ENCODE measurements at regions of chr20 and their contacts with region 1.

Region 1: DNA sequence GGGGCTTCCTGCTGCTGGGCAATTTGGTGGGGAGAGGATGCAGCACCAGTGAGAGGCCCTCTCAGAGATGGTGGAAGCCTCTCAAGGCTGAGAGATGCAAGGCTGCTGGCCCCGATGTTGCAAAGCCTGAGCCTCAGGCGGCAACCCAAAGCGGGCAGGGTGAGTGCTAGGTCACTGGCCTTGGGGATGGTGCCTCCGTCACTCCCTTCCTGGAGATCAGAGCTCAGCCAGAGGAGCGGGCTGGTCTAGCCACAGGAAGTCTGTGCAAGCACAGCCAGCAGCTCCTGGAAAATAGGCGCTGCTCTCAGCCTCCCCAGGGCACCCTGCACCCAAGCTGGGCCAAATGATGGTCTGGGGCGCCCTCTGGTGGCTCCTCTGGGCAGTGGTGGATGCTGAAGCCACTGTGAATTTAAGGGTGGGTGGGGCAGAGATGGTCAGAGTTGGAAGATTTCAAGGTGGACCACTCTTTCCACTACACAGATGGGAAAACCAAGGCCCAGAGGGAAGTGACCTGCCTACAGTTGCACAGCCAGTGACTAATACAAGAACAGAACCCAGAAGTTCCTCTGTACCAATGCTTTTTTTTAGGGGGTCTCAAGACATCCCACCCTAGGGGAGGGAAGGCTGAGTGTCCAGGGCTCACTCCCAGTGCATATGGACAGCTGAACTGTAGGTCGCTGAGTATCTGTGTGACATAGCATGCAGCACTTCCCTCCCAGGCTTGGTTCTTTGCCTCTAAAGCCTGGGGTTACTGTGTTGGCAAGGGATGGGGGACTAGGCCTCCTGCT is 20.8 kb downstream of the C20orf203 start:
- DNase-seq: peak; percentile 77 to 97 (median 86)
- ATAC-seq: peak; percentile 97
- H3K4me3 ChIP-seq: no peak overlapping the region
- H3K4me3 Mint-ChIP-seq: peak overlapping the region; percentile 56
- H3K27ac ChIP-seq: no peak overlapping the region
- H3K27ac Mint-ChIP-seq: no peak overlapping the region
- H3K4me1 ChIP-seq: peaks cover 7% of the 10 kb centered on the region
- H3K4me1 Mint-ChIP-seq: peaks cover 8% of the 10 kb centered on the region
- H3K27me3 ChIP-seq: no peaks in the 10 kb centered on the region
- H3K27me3 Mint-ChIP-seq: no peaks in the 10 kb centered on the region
- CTCF ChIP-seq: peak; percentile 95

Region 2: GRCh38 chr20:31738729-31739561 is 914.0 kb before region 1 on chr20 and contains the start of gene TPX2:
- CTCF ChIA-PET with region 1: no interaction called
- POLR2A ChIA-PET with region 1: no interaction called
- intact Hi-C with region 1: no loop called
- DNase-seq: peak; percentile 33 to 91 (median 78)
- ATAC-seq: peak; percentile 88
- H3K4me3 ChIP-seq: peak within 1 kb of the TSS; percentile 74 to 80
- H3K4me3 Mint-ChIP-seq: no peak within 1 kb of the TSS
- H3K27ac ChIP-seq: no peak within 1 kb of the TSS
- H3K27ac Mint-ChIP-seq: no peak within 1 kb of the TSS
- H3K4me1 ChIP-seq: peaks cover 15% of the 10 kb centered on the region
- H3K4me1 Mint-ChIP-seq: no peaks in the 10 kb centered on the region
- H3K27me3 ChIP-seq: no peaks in the 10 kb centered on the region
- H3K27me3 Mint-ChIP-seq: no peaks in the 10 kb centered on the region
- CTCF ChIP-seq: no peak
- total RNA-seq, gene TPX2: 0.62 to 0.75 TPM

Region 3: GRCh38 chr20:31822421-31823330 is 830.3 kb before region 1 on chr20:
- CTCF ChIA-PET with region 1: interaction called, 5 read pairs
- POLR2A ChIA-PET with region 1: no interaction called
- intact Hi-C with region 1: loop called (anchors 2 kb)
- DNase-seq: peak; percentile 53 to 88 (median 78)
- ATAC-seq: peak; percentile 88
- H3K4me3 ChIP-seq: no peak overlapping the region
- H3K4me3 Mint-ChIP-seq: no peak overlapping the region
- H3K27ac ChIP-seq: no peak overlapping the region
- H3K27ac Mint-ChIP-seq: no peak overlapping the region
- H3K4me1 ChIP-seq: peaks cover 6% of the 10 kb centered on the region
- H3K4me1 Mint-ChIP-seq: peaks cover 6% of the 10 kb centered on the region
- H3K27me3 ChIP-seq: peaks cover 0 to 4% of the 10 kb centered on the region in 2 experiments
- H3K27me3 Mint-ChIP-seq: no peaks in the 10 kb centered on the region
- CTCF ChIP-seq: peak; percentile 98

Region 4: GRCh38 chr20:32091888-32092346 is 561.0 kb before region 1 on chr20:
- CTCF ChIA-PET with region 1: no interaction called
- POLR2A ChIA-PET with region 1: no interaction called
- intact Hi-C with region 1: loop called in 1 of 2 experiments (anchors 5 kb)
- DNase-seq: peak; percentile 56 to 80 (median 77)
- ATAC-seq: peak; percentile 98
- H3K4me3 ChIP-seq: no peak overlapping the region
- H3K4me3 Mint-ChIP-seq: no peak overlapping the region
- H3K27ac ChIP-seq: no peak overlapping the region
- H3K27ac Mint-ChIP-seq: no peak overlapping the region
- H3K4me1 ChIP-seq: no peaks in the 10 kb centered on the region
- H3K4me1 Mint-ChIP-seq: no peaks in the 10 kb centered on the region
- H3K27me3 ChIP-seq: no peaks in the 10 kb centered on the region
- H3K27me3 Mint-ChIP-seq: peaks cover 9% of the 10 kb centered on the region
- CTCF ChIP-seq: peak; percentile 94

Region 5: GRCh38 chr20:32437391-32438074 is 215.4 kb before region 1 on chr20:
- CTCF ChIA-PET with region 1: interaction called, 3 read pairs
- POLR2A ChIA-PET with region 1: no interaction called
- intact Hi-C with region 1: loop called (anchors 1 to 10 kb)
- DNase-seq: peak in 3 of 9 experiments; percentile 26 to 48 (median 39)
- ATAC-seq: peak; percentile 54
- H3K4me3 ChIP-seq: no peak overlapping the region
- H3K4me3 Mint-ChIP-seq: no peak overlapping the region
- H3K27ac ChIP-seq: no peak overlapping the region
- H3K27ac Mint-ChIP-seq: no peak overlapping the region
- H3K4me1 ChIP-seq: no peaks in the 10 kb centered on the region
- H3K4me1 Mint-ChIP-seq: peaks cover 8% of the 10 kb centered on the region
- H3K27me3 ChIP-seq: no peaks in the 10 kb centered on the region
- H3K27me3 Mint-ChIP-seq: no peaks in the 10 kb centered on the region
- CTCF ChIP-seq: peak; percentile 26

Region 6: GRCh38 chr20:32521780-32522525 is 131.0 kb before region 1 on chr20:
- CTCF ChIA-PET with region 1: interaction called, 337 read pairs
- POLR2A ChIA-PET with region 1: interaction called, 12 read pairs
- intact Hi-C with region 1: loop called (anchors 1 kb)
- DNase-seq: peak in 8 of 9 experiments; percentile 55 to 83 (median 74)
- ATAC-seq: peak; percentile 78
- H3K4me3 ChIP-seq: no peak overlapping the region
- H3K4me3 Mint-ChIP-seq: peak overlapping the region; percentile 54
- H3K27ac ChIP-seq: peak overlapping the region in 1 of 2 experiments; percentile 52
- H3K27ac Mint-ChIP-seq: peak overlapping the region; percentile 92
- H3K4me1 ChIP-seq: peaks cover 66% of the 10 kb centered on the region
- H3K4me1 Mint-ChIP-seq: peaks cover 66% of the 10 kb centered on the region
- H3K27me3 ChIP-seq: no peaks in the 10 kb centered on the region
- H3K27me3 Mint-ChIP-seq: no peaks in the 10 kb centered on the region
- CTCF ChIP-seq: peak; percentile 79

Region 7: GRCh38 chr20:32642257-32643046 is 10.5 kb before region 1 on chr20:
- CTCF ChIA-PET with region 1: interaction called, 13 read pairs
- POLR2A ChIA-PET with region 1: no interaction called
- intact Hi-C with region 1: no loop called
- DNase-seq: no peak
- ATAC-seq: no peak
- H3K4me3 ChIP-seq: no peak overlapping the region
- H3K4me3 Mint-ChIP-seq: no peak overlapping the region
- H3K27ac ChIP-seq: no peak overlapping the region
- H3K27ac Mint-ChIP-seq: no peak overlapping the region
- H3K4me1 ChIP-seq: no peaks in the 10 kb centered on the region
- H3K4me1 Mint-ChIP-seq: no peaks in the 10 kb centered on the region
- H3K27me3 ChIP-seq: no peaks in the 10 kb centered on the region
- H3K27me3 Mint-ChIP-seq: no peaks in the 10 kb centered on the region
- CTCF ChIP-seq: no peak

Measured in CD8-positive, alpha-beta T cell (primary cell).